Left ventricle myocardium inferior (tissue), 1 donor: ENCODE measurements at regions of chr1 and their contacts with region 1.

Region 1: DNA sequence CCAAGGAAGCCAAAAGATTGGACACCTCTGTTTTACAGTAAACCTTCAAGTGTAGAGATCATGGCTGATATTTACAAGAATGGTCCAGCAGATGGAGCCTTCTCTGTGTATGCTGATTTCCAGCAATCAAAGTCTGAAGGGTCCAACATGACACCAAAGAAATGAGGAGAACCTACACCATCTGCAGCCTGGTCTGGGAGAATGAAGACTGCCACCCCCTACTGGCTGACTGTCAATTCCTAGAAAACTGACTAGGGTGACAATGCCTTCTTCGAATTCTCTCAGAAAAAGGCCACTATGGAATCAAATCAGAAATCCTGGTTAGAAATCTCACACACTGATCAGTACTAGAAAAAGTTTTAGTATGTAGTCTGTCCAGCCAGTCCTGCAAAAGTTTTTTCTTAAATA is 83.3 kb downstream of the CDC42BPA start:
- DNase-seq: no peak
- H3K4me3 ChIP-seq: no peak overlapping the region
- H3K27ac ChIP-seq: no peak overlapping the region
- H3K4me1 ChIP-seq: peaks cover 34% of the 10 kb centered on the region
- H3K27me3 ChIP-seq: no peaks in the 10 kb centered on the region
- CTCF ChIP-seq: peak; percentile 62

Region 2: DNA sequence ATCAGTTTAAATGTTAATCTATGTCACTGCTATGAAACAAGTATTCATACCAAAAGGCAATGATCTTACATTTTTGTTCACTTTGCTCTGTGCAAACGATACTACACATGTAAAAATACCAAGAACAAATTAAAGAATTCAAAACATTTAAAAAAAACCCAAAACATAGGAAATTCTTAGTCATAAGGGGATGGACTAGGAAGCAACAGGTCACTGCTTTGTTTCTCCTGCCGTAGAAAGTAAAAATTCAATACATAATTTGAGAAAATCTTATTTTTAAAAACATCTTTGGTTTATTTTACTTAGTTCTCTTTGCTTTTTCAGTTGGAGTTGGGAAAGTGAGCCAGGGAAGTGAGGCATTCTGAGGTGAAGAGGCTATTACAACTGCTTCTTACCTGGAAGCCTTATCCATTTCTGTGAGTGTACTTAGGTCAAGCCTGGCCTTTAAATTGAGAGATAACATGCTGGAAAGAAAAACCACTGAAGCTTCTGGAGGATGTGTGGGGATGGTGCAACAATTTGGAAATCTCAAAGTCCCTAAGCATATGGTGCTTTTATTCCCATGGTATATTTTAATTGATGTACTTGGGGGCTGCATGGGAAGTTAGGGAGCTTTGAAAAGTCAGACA is 100.2 kb before region 1 on chr1:
- intact Hi-C with region 1: no loop called
- DNase-seq: no peak
- H3K4me3 ChIP-seq: no peak overlapping the region
- H3K27ac ChIP-seq: no peak overlapping the region
- H3K4me1 ChIP-seq: peaks cover 9% of the 10 kb centered on the region
- H3K27me3 ChIP-seq: no peaks in the 10 kb centered on the region
- CTCF ChIP-seq: no peak

Region 3: GRCh38 chr1:227325156-227325555 is 90.2 kb after region 1 on chr1:
- intact Hi-C with region 1: no loop called
- DNase-seq: no peak
- H3K4me3 ChIP-seq: no peak overlapping the region
- H3K27ac ChIP-seq: no peak overlapping the region
- H3K4me1 ChIP-seq: no peaks in the 10 kb centered on the region
- H3K27me3 ChIP-seq: no peaks in the 10 kb centered on the region
- CTCF ChIP-seq: no peak

Region 4: DNA sequence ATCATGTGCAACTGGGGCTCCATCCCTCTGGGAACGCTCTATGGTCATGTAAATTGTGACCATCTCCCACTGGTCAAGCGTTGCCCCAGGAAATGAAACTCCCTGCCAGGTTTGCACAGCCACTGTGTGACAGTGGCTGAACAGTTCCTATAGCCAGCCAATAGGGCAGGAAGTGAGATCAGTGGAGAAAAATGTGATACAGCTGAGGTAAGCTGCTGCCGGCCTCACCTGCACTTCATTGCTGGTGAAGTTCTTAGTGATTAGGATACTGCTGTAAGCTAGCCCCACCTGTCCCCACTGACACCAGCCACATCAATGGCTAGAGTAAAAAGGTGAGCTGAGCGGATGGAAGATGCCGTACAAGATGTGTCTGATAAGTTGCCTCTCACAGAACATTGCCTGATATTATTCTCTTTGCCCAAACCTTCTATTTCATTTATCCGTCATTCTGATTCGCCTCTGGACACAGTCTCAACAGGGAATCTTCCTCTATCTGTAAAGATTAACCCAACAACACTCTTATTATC is 121.7 kb after region 1 on chr1:
- intact Hi-C with region 1: no loop called
- DNase-seq: no peak
- H3K4me3 ChIP-seq: no peak overlapping the region
- H3K27ac ChIP-seq: peak overlapping the region; percentile 89
- H3K4me1 ChIP-seq: peaks cover 40% of the 10 kb centered on the region
- H3K27me3 ChIP-seq: no peaks in the 10 kb centered on the region
- CTCF ChIP-seq: no peak

Region 5: DNA sequence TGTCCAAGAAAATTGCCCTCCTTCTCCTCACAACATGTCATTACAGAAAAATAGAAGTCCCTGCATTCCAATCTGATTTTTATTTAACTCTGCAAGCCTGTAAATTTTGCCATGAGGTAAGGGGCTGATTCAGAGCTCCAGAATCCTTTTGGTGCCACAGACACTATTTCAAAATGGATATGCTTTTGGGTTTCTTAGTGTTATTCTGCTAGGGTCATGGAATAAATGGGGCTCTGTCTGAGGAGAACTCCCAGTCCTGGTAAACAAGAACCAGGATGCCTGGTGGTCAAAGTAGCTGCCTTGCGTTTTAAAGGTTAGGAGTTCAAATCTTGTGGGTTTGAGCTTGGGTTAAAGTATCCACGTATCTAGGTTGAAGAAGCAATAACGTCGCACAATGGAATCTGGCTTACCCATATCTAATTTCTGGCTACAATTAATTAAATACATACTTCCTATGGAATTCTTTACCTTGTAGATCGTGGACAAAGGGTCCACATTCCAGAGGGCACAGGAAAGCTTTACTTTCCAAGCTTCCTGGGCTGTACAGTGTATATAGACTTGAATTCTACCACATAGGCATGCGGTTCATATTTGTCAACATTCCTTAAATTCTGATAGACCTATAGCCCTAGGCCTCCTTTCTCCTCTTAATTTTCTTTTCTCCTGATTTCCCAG is 181.3 kb after region 1 on chr1:
- intact Hi-C with region 1: loop called (anchors 10 kb)
- DNase-seq: no peak
- H3K4me3 ChIP-seq: no peak overlapping the region
- H3K27ac ChIP-seq: no peak overlapping the region
- H3K4me1 ChIP-seq: peaks cover 21% of the 10 kb centered on the region
- H3K27me3 ChIP-seq: no peaks in the 10 kb centered on the region
- CTCF ChIP-seq: no peak

Region 6: GRCh38 chr1:227547310-227548118 is 312.5 kb after region 1 on chr1:
- intact Hi-C with region 1: no loop called
- DNase-seq: no peak
- H3K4me3 ChIP-seq: no peak overlapping the region
- H3K27ac ChIP-seq: no peak overlapping the region
- H3K4me1 ChIP-seq: peaks cover 8% of the 10 kb centered on the region
- H3K27me3 ChIP-seq: no peaks in the 10 kb centered on the region
- CTCF ChIP-seq: no peak